ENCODE measurements at regions of chr21 and their contacts with region 1.

Region 1: DNA sequence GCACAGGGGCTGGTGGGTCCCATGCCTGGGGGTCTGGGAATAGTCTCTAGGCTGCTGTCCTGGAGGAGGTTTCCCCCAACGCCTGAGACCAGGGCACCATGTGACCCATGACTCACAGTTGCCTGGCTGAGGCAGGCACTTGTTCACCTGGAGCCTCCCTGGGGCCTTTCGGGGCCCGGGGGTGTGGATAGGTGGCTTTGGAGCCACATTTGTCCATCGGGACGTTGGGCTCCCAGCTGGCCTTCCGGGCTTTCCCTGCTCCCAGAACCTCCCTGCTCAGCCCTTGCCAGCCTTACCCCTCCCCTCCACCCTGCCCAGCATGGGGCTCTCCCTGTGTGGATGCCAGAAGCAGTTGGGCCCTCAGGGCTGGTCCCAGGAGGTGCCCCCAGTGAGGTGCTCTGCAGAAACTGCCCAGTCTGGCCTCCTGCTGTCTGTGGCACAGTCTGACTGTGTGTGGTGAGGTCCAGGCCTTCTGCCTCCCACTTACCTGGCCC is 14.2 kb downstream of the COL6A1 start:
- DNase-seq: peak in 1 of 2 donors; percentile 3
- ATAC-seq: no peak
- H3K4me3 ChIP-seq: no peak overlapping the region
- H3K27ac ChIP-seq: peak overlapping the region in 2 of 10 donors; percentile 27 to 74
- H3K4me1 ChIP-seq: peaks cover 0 to 25% (median 4%) of the 10 kb centered on the region in 9 donors
- H3K27me3 ChIP-seq: no peaks in the 10 kb centered on the region
- CTCF ChIP-seq: no peak

Region 2: GRCh38 chr21:46110499-46111192 is 114.9 kb after region 1 on chr21:
- intact Hi-C with region 1: loop called in 1 of 10 experiments (anchors 10 kb)
- DNase-seq: peak; percentile 76 to 78
- ATAC-seq: peak; percentile 79 to 97 (median 90)
- H3K4me3 ChIP-seq: peak overlapping the region in 5 of 10 donors; percentile 1 to 28 (median 7)
- H3K27ac ChIP-seq: peak overlapping the region; percentile 61 to 87 (median 80)
- H3K4me1 ChIP-seq: peaks cover 10 to 29% (median 16%) of the 10 kb centered on the region in 9 donors
- H3K27me3 ChIP-seq: no peaks in the 10 kb centered on the region
- CTCF ChIP-seq: peak in 5 of 9 donors; percentile 3 to 41 (median 34)